ENCODE measurements at regions of chr13 and their contacts with region 1.

Region 1: GRCh38 chr13:38914070-38914469 is 76.6 kb downstream of the STOML3 start:
- DNase-seq: no peak
- ATAC-seq: no peak
- H3K4me3 ChIP-seq: no peak overlapping the region
- H3K27ac ChIP-seq: no peak overlapping the region
- H3K4me1 ChIP-seq: no peaks in the 10 kb centered on the region
- H3K27me3 ChIP-seq: no peaks in the 10 kb centered on the region
- CTCF ChIP-seq: no peak
- EP300 ChIP-seq: no peak
- POLR2A ChIP-seq: no peak
- RAD21 ChIP-seq: no peak

Region 2: GRCh38 chr13:37074703-37075102 is 1839.4 kb before region 1 on chr13:
- CTCF ChIA-PET with region 1: no interaction called
- POLR2A ChIA-PET with region 1: no interaction called
- in situ Hi-C with region 1: no loop called
- intact Hi-C with region 1: loop called (anchors 10 kb)
- DNase-seq: no peak
- ATAC-seq: peak; percentile 57; the same call in 1 of the 3 replicates
- H3K4me3 ChIP-seq: no peak overlapping the region
- H3K27ac ChIP-seq: no peak overlapping the region
- H3K4me1 ChIP-seq: peaks cover 0 to 3% of the 10 kb centered on the region in 2 experiments; a peak in 1 of 5 replicates
- H3K27me3 ChIP-seq: peaks cover 0 to 14% of the 10 kb centered on the region in 2 experiments; a peak in 1 of 5 replicates
- CTCF ChIP-seq: peak in 1 of 3 experiments; percentile 36; a peak in 2 of 6 replicates
- EP300 ChIP-seq: no peak
- POLR2A ChIP-seq: no peak
- RAD21 ChIP-seq: peak; percentile 18 to 41; a peak in 2 of 4 replicates

Region 3: GRCh38 chr13:38702669-38703068 is 211.4 kb before region 1 on chr13:
- CTCF ChIA-PET with region 1: no interaction called
- POLR2A ChIA-PET with region 1: no interaction called
- in situ Hi-C with region 1: no loop called
- intact Hi-C with region 1: loop called (anchors 10 kb)
- DNase-seq: no peak
- ATAC-seq: no peak
- H3K4me3 ChIP-seq: no peak overlapping the region
- H3K27ac ChIP-seq: no peak overlapping the region
- H3K4me1 ChIP-seq: no peaks in the 10 kb centered on the region
- H3K27me3 ChIP-seq: no peaks in the 10 kb centered on the region
- CTCF ChIP-seq: no peak
- EP300 ChIP-seq: no peak
- POLR2A ChIP-seq: no peak
- RAD21 ChIP-seq: no peak

Region 4: GRCh38 chr13:38743466-38743865 is 170.6 kb before region 1 on chr13:
- CTCF ChIA-PET with region 1: no interaction called
- POLR2A ChIA-PET with region 1: no interaction called
- in situ Hi-C with region 1: no loop called
- intact Hi-C with region 1: no loop called
- DNase-seq: no peak
- ATAC-seq: no peak
- H3K4me3 ChIP-seq: no peak overlapping the region
- H3K27ac ChIP-seq: no peak overlapping the region
- H3K4me1 ChIP-seq: no peaks in the 10 kb centered on the region
- H3K27me3 ChIP-seq: no peaks in the 10 kb centered on the region
- CTCF ChIP-seq: no peak
- EP300 ChIP-seq: no peak
- POLR2A ChIP-seq: no peak
- RAD21 ChIP-seq: no peak

Region 5: DNA sequence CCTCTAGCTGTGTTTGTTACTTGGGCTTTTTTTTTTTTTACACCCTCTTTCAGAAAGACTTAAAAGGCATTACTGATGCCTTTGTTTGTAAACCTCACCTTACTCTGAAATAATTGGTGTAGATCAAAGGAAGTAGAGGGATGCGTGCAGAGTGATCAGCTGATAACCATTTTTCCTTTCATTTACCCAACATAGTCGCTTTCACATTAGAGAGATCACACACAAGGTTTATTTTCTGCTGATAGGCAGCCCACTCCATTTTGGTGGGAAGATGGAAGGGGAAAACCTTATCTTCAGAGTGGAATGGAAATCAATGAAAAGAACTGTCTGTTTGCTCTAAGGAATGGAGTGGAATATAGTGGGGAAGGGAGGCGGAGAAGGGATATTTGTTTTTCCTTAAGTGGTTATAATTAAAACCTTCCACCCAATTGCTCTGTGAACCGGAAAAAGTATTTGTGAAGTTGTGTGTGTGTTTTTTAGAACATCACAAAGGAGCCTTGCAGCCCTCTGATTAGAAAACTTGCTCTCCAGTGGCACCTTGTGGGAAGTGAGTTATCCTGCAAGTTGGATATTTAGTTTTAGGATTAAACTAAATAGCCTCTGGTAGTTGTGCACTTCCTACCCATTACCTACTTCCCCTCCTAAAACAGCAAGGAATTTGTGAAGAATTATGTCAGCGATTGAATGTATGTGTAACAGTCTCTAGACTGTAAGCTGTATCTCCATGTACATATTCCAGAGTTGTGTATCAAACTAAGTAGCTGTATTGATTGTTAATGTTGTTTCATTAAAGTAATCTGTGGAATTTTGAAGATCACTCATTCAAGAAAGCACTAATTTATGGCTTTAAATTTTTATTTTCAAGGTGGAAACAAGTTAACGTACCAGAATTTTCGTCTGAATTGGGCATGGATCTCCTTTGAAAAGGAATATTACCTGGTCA is 150.4 kb before region 1 on chr13:
- CTCF ChIA-PET with region 1: no interaction called
- POLR2A ChIA-PET with region 1: no interaction called
- in situ Hi-C with region 1: no loop called
- intact Hi-C with region 1: loop called (anchors 10 kb)
- DNase-seq: peak in 2 of 4 experiments; percentile 14 to 24
- ATAC-seq: peak; percentile 83
- H3K4me3 ChIP-seq: no peak overlapping the region
- H3K27ac ChIP-seq: no peak overlapping the region
- H3K4me1 ChIP-seq: no peaks in the 10 kb centered on the region
- H3K27me3 ChIP-seq: no peaks in the 10 kb centered on the region
- CTCF ChIP-seq: peak; percentile 40 to 44 (median 41); a peak in 4 of 6 replicates
- EP300 ChIP-seq: no peak
- POLR2A ChIP-seq: no peak
- RAD21 ChIP-seq: peak in 1 of 2 experiments; percentile 44; a peak in 2 of 4 replicates